ENCODE measurements at regions of chr20 and their contacts with region 1.

Region 1: GRCh38 chr20:25136643-25137559 is 55.0 kb upstream of the VSX1 start:
- DNase-seq: peak; percentile 78
- ATAC-seq: peak; percentile 85
- H3K4me3 ChIP-seq: no peak overlapping the region
- H3K27ac ChIP-seq: no peak overlapping the region
- H3K4me1 ChIP-seq: peaks cover 19% of the 10 kb centered on the region
- H3K27me3 ChIP-seq: no peaks in the 10 kb centered on the region
- CTCF ChIP-seq: no peak

Region 2: GRCh38 chr20:25032478-25033280 is 104.2 kb before region 1 on chr20:
- CTCF ChIA-PET with region 1: no interaction called
- POLR2A ChIA-PET with region 1: no interaction called
- intact Hi-C with region 1: no loop called
- DNase-seq: no peak
- ATAC-seq: no peak
- H3K4me3 ChIP-seq: no peak overlapping the region
- H3K27ac ChIP-seq: no peak overlapping the region
- H3K4me1 ChIP-seq: no peaks in the 10 kb centered on the region
- H3K27me3 ChIP-seq: no peaks in the 10 kb centered on the region
- CTCF ChIP-seq: no peak

Region 3: GRCh38 chr20:25076731-25077609 is 59.9 kb before region 1 on chr20:
- CTCF ChIA-PET with region 1: no interaction called
- POLR2A ChIA-PET with region 1: no interaction called
- intact Hi-C with region 1: loop called (anchors 5 kb)
- DNase-seq: peak; percentile 88
- ATAC-seq: peak; percentile 90
- H3K4me3 ChIP-seq: peak overlapping the region; percentile 45
- H3K27ac ChIP-seq: peak overlapping the region; percentile 12; the same call in 1 of the 2 replicates
- H3K4me1 ChIP-seq: peaks cover 31% of the 10 kb centered on the region
- H3K27me3 ChIP-seq: no peaks in the 10 kb centered on the region
- CTCF ChIP-seq: peak; percentile 57

Region 4: GRCh38 chr20:25178563-25179438 is 41.9 kb after region 1 on chr20:
- CTCF ChIA-PET with region 1: interaction called, 10 read pairs
- POLR2A ChIA-PET with region 1: no interaction called
- intact Hi-C with region 1: loop called (anchors 1 kb)
- DNase-seq: peak; percentile 99
- ATAC-seq: peak; percentile 94
- H3K4me3 ChIP-seq: peak overlapping the region; percentile 21; the same call in 1 of the 2 replicates
- H3K27ac ChIP-seq: peak overlapping the region; percentile 52
- H3K4me1 ChIP-seq: peaks cover 34% of the 10 kb centered on the region
- H3K27me3 ChIP-seq: no peaks in the 10 kb centered on the region
- CTCF ChIP-seq: peak; percentile 99